Endothelial cell of umbilical vein (primary cell): ENCODE measurements at regions of chr1 and their contacts with region 1.

Region 1: DNA sequence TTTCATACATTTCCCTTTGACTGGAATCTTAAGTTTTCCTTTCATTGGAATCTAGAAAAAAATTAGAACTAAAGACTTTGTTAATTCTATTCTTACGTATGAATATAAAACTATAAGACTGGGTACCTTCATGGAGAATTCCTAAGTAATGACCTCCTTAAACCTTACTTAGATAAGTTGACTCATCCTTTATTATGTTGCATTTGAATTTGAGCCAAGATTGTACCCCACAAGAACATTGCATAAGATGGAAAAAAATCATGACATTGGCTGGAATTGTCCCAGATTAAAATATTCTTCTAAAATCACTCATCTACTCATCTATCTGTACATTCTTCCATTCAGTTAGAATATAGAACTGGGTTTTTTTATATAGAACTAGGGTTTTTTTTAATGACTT is 137.4 kb downstream of the C1orf21 start:
- DNase-seq: no peak
- H3K4me3 ChIP-seq: no peak overlapping the region
- H3K27ac ChIP-seq: no peak overlapping the region
- H3K4me1 ChIP-seq: peaks cover 4% of the 10 kb centered on the region
- H3K27me3 ChIP-seq: no peaks in the 10 kb centered on the region
- CTCF ChIP-seq: no peak
- POLR2A ChIP-seq: no peak

Region 2: DNA sequence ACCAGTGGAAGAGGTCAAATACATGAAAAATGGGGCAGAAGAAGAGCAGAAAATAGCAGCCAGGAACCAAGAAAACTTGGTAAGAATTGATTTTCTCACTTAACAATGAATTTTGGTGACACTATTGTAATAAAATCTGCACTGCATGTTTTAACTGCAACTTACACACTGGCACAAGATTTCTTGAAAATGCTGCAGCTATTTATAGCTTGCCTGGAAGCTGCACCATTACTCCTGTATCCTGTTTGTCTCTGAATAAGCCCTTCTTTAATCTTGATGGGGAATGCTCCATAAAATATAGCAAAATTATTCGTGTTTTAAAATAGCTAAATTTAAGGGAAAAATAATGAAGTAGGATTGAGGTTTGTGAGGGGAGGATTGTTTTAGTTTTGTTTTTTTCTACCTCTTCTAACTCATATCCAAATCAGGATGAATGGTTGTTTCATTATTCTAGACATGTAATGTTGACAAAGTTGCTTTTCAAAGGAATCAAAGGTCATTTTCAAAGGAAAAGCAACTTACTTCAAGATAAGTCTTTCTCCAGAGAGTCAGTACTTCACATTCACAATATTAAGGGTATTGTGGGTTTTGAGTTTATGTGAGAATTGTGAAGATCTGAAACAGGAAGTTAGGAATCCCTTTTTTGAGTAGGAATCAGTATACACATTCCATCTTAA is 16.5 kb before region 1 on chr1:
- CTCF ChIA-PET with region 1: interaction called, 5 read pairs
- POLR2A ChIA-PET with region 1: no interaction called
- dilution Hi-C with region 1: no loop called
- intact Hi-C with region 1: loop called (anchors 2 kb)
- DNase-seq: peak; percentile 72
- H3K4me3 ChIP-seq: no peak overlapping the region
- H3K27ac ChIP-seq: peak overlapping the region; percentile 10
- H3K4me1 ChIP-seq: peaks cover 14% of the 10 kb centered on the region
- H3K27me3 ChIP-seq: no peaks in the 10 kb centered on the region
- CTCF ChIP-seq: no peak
- POLR2A ChIP-seq: no peak